ENCODE measurements at regions of chr12 and their contacts with region 1.

Region 1: GRCh38 chr12:45990468-45991283 is at the start of gene SCAF11:
- DNase-seq: peak; percentile 100
- ATAC-seq: peak; percentile 79
- H3K4me3 Mint-ChIP-seq: peak within 1 kb of the TSS; percentile 93
- H3K27ac Mint-ChIP-seq: peak within 1 kb of the TSS; percentile 100
- H3K4me1 Mint-ChIP-seq: peaks cover 34% of the 10 kb centered on the region
- H3K27me3 Mint-ChIP-seq: no peaks in the 10 kb centered on the region
- total RNA-seq, gene SCAF11: 132 to 145 TPM

Region 2: DNA sequence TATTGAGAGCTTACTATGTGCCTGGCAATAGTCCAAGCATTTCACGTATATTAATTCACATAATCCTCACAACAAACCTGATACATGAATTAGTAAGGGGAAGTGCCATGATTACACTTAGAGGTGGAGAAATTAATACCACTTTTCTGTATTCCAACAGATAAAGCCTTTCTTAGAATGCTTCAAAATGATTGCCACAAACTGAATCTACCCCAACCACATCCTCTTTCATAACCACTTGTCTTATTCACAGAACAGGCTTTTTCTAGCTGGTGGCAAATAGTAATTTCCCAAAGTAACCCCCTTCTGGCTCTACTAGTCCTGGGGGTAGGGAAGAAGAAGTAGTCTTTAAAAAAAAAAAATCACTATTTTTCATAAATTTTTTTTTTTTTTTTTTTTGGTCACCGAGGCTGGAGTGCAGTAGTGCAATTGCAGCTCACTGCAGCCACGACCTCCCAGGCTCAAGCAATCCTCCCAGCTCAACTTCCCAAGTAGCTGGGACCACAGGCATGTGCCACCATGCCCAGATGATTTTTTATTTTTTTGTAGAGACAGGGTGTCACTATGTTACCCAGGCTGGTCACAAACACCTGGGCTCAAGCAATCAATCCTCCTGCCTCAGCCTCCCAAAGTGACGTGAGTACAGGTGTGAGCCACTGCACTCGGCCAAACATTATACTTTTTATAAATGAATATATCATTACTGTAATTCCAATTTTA is 320.2 kb before region 1 on chr12:
- CTCF ChIA-PET with region 1: no interaction called
- POLR2A ChIA-PET with region 1: no interaction called
- intact Hi-C with region 1: loop called in 1 of 2 experiments (anchors 5 kb)
- DNase-seq: peak; percentile 10
- ATAC-seq: peak; percentile 70
- H3K4me3 Mint-ChIP-seq: no peak overlapping the region
- H3K27ac Mint-ChIP-seq: no peak overlapping the region
- H3K4me1 Mint-ChIP-seq: peaks cover 24% of the 10 kb centered on the region
- H3K27me3 Mint-ChIP-seq: peaks cover 4% of the 10 kb centered on the region

Region 3: GRCh38 chr12:45688183-45688582 is 302.5 kb before region 1 on chr12:
- CTCF ChIA-PET with region 1: no interaction called
- POLR2A ChIA-PET with region 1: no interaction called
- intact Hi-C with region 1: no loop called
- DNase-seq: no peak
- ATAC-seq: no peak
- H3K4me3 Mint-ChIP-seq: no peak overlapping the region
- H3K27ac Mint-ChIP-seq: no peak overlapping the region
- H3K4me1 Mint-ChIP-seq: peaks cover 10% of the 10 kb centered on the region
- H3K27me3 Mint-ChIP-seq: peaks cover 2% of the 10 kb centered on the region

Region 4: DNA sequence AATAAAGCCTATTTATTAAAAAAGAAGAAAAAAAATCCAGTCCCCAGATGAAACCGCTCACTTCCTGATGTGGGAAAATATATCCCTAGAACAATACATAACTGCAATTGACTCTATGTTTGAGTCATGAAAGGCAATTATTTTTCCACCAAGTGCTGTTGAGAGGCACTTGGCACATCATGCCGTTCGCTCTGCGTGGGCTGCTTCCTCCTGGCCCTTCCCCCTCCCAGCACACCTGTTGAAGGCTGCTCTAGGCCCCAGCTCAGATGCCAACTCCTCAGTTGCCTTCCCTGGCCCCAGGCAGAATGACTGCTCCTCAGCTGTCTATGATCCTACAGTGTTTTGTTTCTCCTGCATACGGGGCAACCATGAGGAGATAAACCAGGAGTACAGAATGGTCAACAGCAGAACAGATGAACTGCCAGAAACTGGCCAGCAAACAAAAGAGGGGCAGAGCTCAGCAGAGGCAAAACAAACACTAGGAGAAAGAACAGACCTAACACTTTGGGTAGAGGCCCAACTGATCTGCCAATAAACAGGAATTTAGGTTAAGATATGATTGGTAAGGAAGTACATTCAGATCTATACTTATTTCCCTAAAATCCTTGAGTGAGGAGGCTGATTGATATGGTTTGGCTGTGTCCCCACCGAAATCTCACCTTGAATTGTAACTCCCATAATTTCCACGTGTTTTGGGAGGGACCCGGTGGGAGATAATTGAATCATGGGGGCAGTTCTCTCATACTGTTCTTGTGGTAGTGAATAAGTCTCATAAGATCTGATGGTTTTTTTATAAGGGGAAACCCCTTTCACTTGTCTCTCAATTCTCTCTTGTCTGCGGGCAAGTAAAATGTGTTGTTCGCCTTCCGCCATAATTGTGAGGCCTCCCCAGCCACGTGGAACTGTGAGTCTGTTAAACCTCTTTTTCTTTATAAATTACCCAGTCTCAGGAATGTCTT is 219.5 kb after region 1 on chr12:
- CTCF ChIA-PET with region 1: no interaction called
- POLR2A ChIA-PET with region 1: no interaction called
- intact Hi-C with region 1: loop called (anchors 2 kb)
- DNase-seq: peak; percentile 88
- ATAC-seq: peak; percentile 71
- H3K4me3 Mint-ChIP-seq: peak overlapping the region; percentile 58
- H3K27ac Mint-ChIP-seq: peak overlapping the region; percentile 97
- H3K4me1 Mint-ChIP-seq: peaks cover 79% of the 10 kb centered on the region
- H3K27me3 Mint-ChIP-seq: no peaks in the 10 kb centered on the region

Region 5: GRCh38 chr12:46303039-46303666 is 312.5 kb after region 1 on chr12:
- CTCF ChIA-PET with region 1: no interaction called
- POLR2A ChIA-PET with region 1: interaction called, 4 read pairs
- intact Hi-C with region 1: loop called in 1 of 2 experiments (anchors 1 kb)
- DNase-seq: peak; percentile 62
- ATAC-seq: peak; percentile 85
- H3K4me3 Mint-ChIP-seq: no peak overlapping the region
- H3K27ac Mint-ChIP-seq: no peak overlapping the region
- H3K4me1 Mint-ChIP-seq: no peaks in the 10 kb centered on the region
- H3K27me3 Mint-ChIP-seq: no peaks in the 10 kb centered on the region

Region 6: GRCh38 chr12:46661110-46661845 is 670.6 kb after region 1 on chr12:
- CTCF ChIA-PET with region 1: no interaction called
- POLR2A ChIA-PET with region 1: no interaction called
- intact Hi-C with region 1: loop called in 1 of 2 experiments (anchors 5 kb)
- DNase-seq: peak; percentile 11
- ATAC-seq: peak; percentile 79
- H3K4me3 Mint-ChIP-seq: no peak overlapping the region
- H3K27ac Mint-ChIP-seq: no peak overlapping the region
- H3K4me1 Mint-ChIP-seq: peaks cover 36% of the 10 kb centered on the region
- H3K27me3 Mint-ChIP-seq: no peaks in the 10 kb centered on the region